ENCODE measurements at regions of chr9 and their contacts with region 1.

Region 1: DNA sequence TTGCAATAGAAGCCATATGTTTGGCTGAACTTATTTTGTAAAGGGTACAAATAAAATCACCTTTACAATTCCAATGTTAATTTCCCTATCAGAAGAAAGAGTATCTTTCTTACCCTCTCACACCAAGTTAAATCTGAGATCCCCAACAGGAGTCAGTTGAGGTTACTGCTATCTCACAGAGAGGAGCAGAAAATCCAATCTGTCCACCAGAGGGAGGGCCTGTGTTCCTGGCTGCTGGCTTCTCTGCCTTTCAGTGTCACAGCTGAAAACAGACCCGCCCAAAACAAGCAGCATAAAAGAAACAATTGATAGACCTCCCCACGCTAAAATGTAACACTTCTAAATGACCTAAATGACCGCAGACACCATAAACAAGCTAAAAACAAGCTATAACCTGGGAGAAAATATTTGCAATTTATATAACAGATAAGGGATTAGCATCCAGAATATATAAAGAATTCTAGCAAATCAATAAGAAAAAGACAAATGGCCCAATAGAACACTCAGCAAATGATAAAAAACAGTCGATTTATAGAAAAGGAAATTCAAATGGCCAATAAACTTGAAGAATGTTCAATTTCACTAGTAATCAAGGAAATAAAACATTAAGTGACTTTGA is 24.5 kb upstream of the MVB12B start:
- DNase-seq: peak; percentile 73
- H3K4me3 ChIP-seq: no peak overlapping the region
- H3K27ac ChIP-seq: no peak overlapping the region
- H3K4me1 ChIP-seq: peaks cover 6% of the 10 kb centered on the region
- H3K27me3 ChIP-seq: no peaks in the 10 kb centered on the region
- CTCF ChIP-seq: peak; percentile 68

Region 2: DNA sequence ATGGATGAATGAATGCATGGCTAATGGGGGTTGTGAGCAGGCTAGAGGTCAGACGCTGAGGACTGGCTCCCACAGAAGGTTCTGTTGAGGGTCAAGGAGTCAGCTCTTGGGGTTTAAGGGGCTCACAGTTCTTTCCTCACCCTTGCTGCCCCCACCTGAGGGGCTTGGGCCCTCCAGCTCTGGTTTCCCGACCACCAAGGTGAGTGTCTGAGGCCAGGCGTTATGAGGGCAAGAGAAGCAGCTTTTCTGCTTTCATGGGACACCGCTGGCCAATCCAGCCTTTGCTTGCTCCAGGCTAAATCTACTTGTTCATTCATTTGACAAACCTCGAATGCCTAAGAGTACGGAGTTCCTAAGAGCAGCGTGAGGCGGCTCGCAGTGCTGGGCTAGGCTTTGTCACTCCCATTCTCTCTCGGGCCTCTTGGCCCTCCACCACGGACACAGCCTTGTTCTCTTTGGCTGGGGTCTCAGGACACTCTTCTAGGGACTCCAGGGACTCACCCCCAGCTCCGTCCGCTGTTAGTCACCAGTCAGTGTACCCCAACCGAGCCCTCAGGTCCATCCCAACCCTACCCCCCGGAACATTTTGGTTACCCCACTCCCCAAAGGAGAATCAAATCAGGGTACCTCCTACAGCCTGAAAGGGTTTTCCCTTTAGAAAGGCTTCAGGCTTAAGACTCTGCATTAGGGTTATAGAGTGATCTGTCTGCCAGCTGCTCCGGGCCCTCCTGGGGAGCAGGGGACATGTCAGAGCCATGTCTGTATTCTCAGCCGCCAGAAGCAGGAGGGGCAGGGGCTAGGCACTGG is 185.5 kb before region 1 on chr9:
- intact Hi-C with region 1: no loop called
- DNase-seq: no peak
- H3K4me3 ChIP-seq: no peak overlapping the region
- H3K27ac ChIP-seq: no peak overlapping the region
- H3K4me1 ChIP-seq: no peaks in the 10 kb centered on the region
- H3K27me3 ChIP-seq: no peaks in the 10 kb centered on the region
- CTCF ChIP-seq: no peak

Region 3: GRCh38 chr9:126488881-126489404 is 186.8 kb after region 1 on chr9:
- intact Hi-C with region 1: loop called (anchors 5 kb)
- DNase-seq: no peak
- H3K4me3 ChIP-seq: no peak overlapping the region
- H3K27ac ChIP-seq: no peak overlapping the region
- H3K4me1 ChIP-seq: no peaks in the 10 kb centered on the region
- H3K27me3 ChIP-seq: no peaks in the 10 kb centered on the region
- CTCF ChIP-seq: no peak

Region 4: DNA sequence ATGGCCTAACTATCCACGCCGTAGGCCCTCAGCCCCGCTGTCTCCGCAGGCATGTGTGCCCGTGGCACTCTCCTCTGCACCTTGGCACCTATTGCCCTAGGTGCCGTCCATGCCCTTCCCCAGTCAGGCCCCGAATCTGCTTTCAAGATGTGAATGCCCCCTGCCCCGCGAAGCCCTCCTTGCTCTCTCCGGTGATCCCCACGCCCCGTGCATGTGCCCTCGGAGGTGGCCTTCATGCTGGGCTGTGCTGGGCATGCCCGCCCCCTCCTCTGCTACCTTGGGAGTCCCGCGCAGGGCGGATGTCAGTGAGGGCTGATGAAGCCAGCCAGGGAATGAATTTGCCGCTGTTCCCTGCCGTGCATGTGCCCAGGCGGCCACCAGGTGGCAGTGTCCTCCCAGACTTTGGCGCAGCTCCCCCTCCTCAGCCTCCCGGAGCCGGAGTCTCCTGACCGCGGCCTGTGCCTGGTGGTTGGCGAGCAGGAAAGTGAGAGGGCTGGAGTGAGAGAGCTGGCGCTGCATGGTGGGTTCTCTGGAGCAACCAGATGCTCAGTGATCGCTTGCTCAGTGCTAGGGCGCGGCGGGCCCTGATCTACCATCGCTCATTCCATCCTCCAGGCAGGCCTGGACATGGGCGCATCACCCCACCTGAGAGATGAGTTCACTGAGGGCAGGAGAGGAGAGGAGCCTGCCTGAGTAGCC is 198.7 kb after region 1 on chr9:
- intact Hi-C with region 1: no loop called
- DNase-seq: peak; percentile 63
- H3K4me3 ChIP-seq: no peak overlapping the region
- H3K27ac ChIP-seq: no peak overlapping the region
- H3K4me1 ChIP-seq: peaks cover 5% of the 10 kb centered on the region
- H3K27me3 ChIP-seq: peaks cover 4% of the 10 kb centered on the region
- CTCF ChIP-seq: peak; percentile 97

Measured in colonic mucosa (tissue), 4 donors.